WTC11 (cell line): ENCODE measurements at regions of chr4 and their contacts with region 1.

Region 1: GRCh38 chr4:150421612-150422011 is 160.3 kb upstream of the MAB21L2 start:
- DNase-seq: no peak
- ATAC-seq: peak; percentile 36; the same call in 1 of the 2 replicates
- H3K4me3 Mint-ChIP-seq: no peak overlapping the region
- H3K27ac Mint-ChIP-seq: 0 out of 2 replicates have a peak overlapping the region, but pooled peaks have one; percentile 26
- H3K4me1 Mint-ChIP-seq: no peaks in the 10 kb centered on the region
- H3K27me3 Mint-ChIP-seq: no peaks in the 10 kb centered on the region
- CTCF ChIP-seq: no peak

Region 2: DNA sequence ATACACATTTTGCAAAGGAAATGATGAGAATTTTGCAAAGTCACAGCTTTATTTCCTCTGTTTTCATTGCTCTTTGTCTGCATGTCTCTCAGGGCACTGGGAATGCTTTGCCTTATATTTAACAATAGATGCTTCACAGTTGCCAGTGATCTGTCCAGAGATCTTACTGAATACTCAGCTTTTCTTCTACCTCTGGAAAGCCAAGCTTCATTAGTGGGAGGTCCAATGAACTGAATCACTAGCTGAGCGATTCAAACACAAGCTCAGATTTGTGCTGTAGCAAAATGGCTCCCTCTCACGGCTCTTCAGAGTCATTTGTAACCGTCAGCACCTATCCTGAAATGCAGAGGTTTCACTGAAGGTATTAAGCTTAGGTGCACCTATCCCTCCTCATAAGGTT is 204.4 kb before region 1 on chr4:
- CTCF ChIA-PET with region 1: no interaction called
- POLR2A ChIA-PET with region 1: interaction called, 10 read pairs
- DNase-seq: no peak
- ATAC-seq: peak; percentile 83
- H3K4me3 Mint-ChIP-seq: no peak overlapping the region
- H3K27ac Mint-ChIP-seq: no peak overlapping the region
- H3K4me1 Mint-ChIP-seq: peaks cover 17% of the 10 kb centered on the region
- H3K27me3 Mint-ChIP-seq: no peaks in the 10 kb centered on the region
- CTCF ChIP-seq: no peak